Endothelial cell of umbilical vein (primary cell): ENCODE measurements at regions of chr21 and their contacts with region 1.

Region 1: DNA sequence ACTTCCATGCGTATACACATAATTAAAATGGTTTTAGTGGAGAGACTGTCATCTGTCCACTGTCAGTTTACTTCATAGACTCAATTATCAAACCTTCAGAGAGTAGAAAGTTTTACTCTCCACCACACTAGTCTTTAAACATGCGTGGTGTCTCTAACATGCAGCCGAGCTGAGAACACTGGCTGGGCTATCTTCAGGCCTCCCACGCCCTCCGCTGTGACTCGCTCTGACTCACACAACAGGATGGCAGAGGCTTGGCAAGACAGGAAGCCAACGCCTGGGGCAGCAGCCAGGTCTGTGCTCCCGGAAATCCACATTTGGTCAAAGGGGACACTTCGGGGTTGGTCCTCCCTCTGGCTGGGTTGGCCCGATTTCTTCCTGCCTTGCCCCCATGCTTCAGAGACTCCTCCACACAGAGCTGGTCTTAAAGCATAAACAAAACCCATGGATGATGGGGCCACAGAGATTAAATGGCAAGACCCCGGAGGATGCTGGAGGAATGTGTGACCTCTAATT is 22.7 kb upstream of the IFNGR2 start:
- DNase-seq: peak; percentile 93
- H3K4me3 ChIP-seq: no peak overlapping the region
- H3K27ac ChIP-seq: peak overlapping the region; percentile 93
- H3K4me1 ChIP-seq: peaks cover 34% of the 10 kb centered on the region
- H3K27me3 ChIP-seq: no peaks in the 10 kb centered on the region
- CTCF ChIP-seq: no peak
- POLR2A ChIP-seq: peak; percentile 56

Region 2: DNA sequence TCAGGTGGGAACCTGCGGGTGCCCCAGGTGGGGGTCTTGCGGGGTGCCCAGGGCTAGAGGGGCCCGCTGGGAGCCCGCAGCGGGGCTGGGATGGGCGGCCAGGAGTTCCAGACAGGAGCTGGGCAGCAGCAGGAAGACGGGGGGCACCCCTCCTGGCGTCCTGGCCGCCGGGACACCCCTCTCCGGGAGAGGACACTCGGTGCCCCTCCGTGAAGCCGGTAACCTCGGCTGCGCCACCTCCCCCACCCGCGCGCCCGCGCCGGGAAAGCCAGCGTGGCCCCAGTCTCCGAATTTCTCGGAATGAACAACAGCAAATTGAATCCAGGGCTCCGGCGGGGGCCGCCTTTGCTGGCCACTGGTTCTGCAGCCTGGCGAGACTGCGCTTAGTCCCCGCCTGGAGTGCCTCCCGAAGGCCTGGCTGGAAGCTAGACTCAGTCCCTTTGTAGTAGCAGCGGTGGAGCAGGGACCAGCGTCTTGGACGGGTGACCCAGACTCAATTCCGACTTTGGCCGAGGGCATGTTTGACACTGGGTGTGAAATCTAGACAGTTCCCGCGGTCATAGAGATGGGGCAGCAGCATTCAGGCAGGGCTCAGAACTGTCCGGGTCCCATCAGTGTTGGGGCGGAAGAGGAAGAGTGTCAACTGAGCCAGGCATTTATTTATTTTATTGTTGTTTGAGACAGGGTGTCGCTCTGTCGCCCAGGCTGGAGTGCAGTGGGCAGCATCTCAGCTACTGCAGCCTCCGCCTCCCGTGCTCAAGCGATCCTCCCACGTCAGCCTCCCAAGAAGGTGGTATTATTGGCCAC is 23.4 kb after region 1 on chr21:
- CTCF ChIA-PET with region 1: interaction called, 6 read pairs
- POLR2A ChIA-PET with region 1: interaction called, 3 read pairs
- dilution Hi-C with region 1: no loop called
- intact Hi-C with region 1: loop called (anchors 1 kb)
- DNase-seq: peak; percentile 44
- H3K4me3 ChIP-seq: peak overlapping the region; percentile 9 to 95 (median 49)
- H3K27ac ChIP-seq: no peak overlapping the region
- H3K4me1 ChIP-seq: peaks cover 7% of the 10 kb centered on the region
- H3K27me3 ChIP-seq: no peaks in the 10 kb centered on the region
- CTCF ChIP-seq: no peak
- POLR2A ChIP-seq: no peak

Region 3: GRCh38 chr21:33421720-33422393 is 41.3 kb after region 1 on chr21:
- CTCF ChIA-PET with region 1: no interaction called
- POLR2A ChIA-PET with region 1: no interaction called
- dilution Hi-C with region 1: no loop called
- intact Hi-C with region 1: no loop called
- DNase-seq: no peak
- H3K4me3 ChIP-seq: no peak overlapping the region
- H3K27ac ChIP-seq: no peak overlapping the region
- H3K4me1 ChIP-seq: peaks cover 11% of the 10 kb centered on the region
- H3K27me3 ChIP-seq: no peaks in the 10 kb centered on the region
- CTCF ChIP-seq: no peak
- POLR2A ChIP-seq: no peak

Region 4: DNA sequence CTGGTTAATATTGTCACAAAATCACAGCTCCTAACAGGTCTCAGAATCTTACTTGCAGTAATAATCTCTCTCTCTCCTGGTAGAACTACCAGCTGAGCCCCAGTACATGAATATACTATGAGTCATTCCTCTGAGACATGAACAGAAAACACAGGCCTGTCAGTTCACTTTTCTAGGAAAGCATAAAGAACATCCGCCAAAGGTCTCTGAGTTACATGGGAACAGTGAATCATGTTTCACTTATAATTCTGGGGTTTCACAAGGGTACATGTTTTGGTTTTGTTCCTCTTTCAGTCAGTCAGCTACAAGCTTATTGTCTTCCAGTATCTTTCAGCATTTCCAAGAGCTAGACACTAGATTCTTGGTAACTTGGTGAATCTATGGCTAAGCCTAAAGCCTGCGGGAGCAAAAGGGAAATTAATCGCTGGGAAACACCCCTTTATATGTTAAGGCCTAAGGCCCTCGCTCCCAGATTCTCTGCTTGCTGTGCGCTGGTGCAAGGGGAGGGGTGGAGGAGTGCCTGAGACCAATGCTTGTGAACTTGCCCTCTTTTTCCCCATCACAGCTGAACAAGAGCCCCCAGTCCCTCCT is 54.3 kb after region 1 on chr21:
- CTCF ChIA-PET with region 1: interaction called, 4 read pairs
- POLR2A ChIA-PET with region 1: no interaction called
- dilution Hi-C with region 1: no loop called
- intact Hi-C with region 1: loop called (anchors 2 kb)
- DNase-seq: peak; percentile 92
- H3K4me3 ChIP-seq: no peak overlapping the region
- H3K27ac ChIP-seq: peak overlapping the region; percentile 58
- H3K4me1 ChIP-seq: peaks cover 15% of the 10 kb centered on the region
- H3K27me3 ChIP-seq: no peaks in the 10 kb centered on the region
- CTCF ChIP-seq: no peak
- POLR2A ChIP-seq: no peak